ENCODE measurements at regions of chr16 and their contacts with region 1.

Region 1: DNA sequence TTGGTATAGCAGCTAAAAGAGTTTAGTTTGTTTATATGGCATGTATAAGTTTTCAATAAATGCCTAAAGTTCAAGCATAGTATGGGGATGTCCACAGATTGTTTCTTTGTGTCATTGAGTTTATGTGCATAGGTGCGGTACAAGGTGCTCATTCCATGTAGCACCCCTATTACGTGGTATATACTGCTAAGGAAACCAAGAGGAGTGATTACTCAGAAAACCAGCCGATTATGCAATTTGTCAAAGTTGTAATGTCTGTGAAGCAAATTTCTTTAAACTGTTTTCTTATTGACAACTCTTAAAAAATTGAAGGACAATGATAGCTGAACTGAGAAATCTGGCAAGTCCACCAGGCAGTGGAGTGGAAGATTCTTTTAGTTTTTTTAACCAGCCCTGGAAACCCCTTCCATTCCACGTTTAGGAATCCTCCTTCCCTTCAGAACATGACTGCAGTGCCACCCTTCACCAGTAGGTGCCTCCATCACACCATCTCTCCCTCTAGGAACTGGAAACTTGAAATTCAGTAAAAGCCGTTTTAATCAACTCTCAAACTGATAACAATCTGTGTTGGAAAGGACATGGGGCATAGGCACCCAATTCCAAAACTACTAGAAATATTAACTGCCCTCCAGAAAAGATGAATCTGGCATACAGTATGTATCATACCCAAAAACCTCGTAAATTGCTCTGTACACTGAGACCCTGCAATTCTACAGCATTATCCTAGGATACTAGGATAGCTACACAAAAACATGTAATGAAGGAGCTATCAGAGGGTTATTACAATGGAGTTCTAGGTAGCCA is 43.5 kb downstream of the REXO5 start:
- DNase-seq: peak; percentile 59
- H3K4me3 ChIP-seq: no peak overlapping the region
- H3K27ac ChIP-seq: no peak overlapping the region
- H3K4me1 ChIP-seq: peaks cover 26% of the 10 kb centered on the region
- H3K27me3 ChIP-seq: no peaks in the 10 kb centered on the region
- CTCF ChIP-seq: peak; percentile 99

Region 2: DNA sequence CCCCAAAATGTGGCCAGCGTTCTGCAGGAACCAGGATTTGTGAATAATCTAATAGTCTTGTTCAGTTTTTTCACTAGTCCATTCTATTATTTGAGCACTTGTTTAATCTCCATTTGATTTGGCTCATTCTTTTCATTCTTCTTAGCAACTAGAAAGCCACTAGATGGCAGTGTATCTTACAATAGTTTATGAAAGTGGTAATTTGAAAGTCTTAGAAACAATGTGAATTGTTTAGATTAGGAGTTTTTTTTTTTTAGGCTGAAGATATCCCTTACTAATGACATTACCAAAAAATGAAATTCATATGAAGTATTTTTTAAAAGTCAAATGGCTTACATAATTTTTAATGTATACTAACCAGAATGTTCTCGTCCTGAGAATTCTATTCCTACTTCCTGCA is 50.2 kb before region 1 on chr16:
- CTCF ChIA-PET with region 1: no interaction called
- dilution Hi-C with region 1: no loop called
- in situ Hi-C with region 1: no loop called
- intact Hi-C with region 1: no loop called
- DNase-seq: no peak
- H3K4me3 ChIP-seq: no peak overlapping the region
- H3K27ac ChIP-seq: no peak overlapping the region
- H3K4me1 ChIP-seq: peaks cover 12% of the 10 kb centered on the region
- H3K27me3 ChIP-seq: no peaks in the 10 kb centered on the region
- CTCF ChIP-seq: peak; percentile 59 to 60

Region 3: DNA sequence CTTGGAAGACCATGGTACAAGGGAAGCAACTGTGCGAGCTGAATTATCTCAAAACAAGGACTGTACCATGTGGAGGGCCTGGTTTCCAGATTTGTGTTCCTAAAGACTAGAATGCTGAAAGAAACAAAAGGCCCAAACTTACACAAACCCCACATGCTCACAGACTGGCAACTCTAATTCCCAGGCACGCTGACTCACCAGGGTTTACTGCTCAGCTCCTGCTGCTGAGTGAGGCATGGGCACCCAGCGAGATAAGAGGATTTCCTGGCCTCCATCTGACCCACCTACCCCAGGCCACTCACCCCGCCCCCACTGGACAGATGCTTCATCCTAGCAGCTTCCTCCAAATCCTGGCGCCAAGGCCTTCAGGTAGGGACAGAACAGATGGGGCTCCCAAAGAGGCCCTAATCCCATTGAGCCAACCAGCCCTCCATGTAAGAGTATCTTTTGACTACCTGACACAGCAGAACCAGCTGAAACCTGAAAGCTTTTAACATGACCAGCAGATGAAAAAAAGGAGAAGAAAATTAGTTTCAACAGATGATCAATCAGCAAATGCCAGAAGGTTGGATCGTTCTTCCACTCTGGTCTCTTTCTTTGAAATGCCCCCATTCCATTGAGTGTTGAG is 16.5 kb after region 1 on chr16:
- CTCF ChIA-PET with region 1: no interaction called
- dilution Hi-C with region 1: no loop called
- in situ Hi-C with region 1: no loop called
- intact Hi-C with region 1: loop called (anchors 1 kb)
- DNase-seq: peak; percentile 88
- H3K4me3 ChIP-seq: peak overlapping the region in 2 of 3 experiments; percentile 2 to 17
- H3K27ac ChIP-seq: peak overlapping the region; percentile 97
- H3K4me1 ChIP-seq: peaks cover 62% of the 10 kb centered on the region
- H3K27me3 ChIP-seq: no peaks in the 10 kb centered on the region
- CTCF ChIP-seq: no peak

Region 4: DNA sequence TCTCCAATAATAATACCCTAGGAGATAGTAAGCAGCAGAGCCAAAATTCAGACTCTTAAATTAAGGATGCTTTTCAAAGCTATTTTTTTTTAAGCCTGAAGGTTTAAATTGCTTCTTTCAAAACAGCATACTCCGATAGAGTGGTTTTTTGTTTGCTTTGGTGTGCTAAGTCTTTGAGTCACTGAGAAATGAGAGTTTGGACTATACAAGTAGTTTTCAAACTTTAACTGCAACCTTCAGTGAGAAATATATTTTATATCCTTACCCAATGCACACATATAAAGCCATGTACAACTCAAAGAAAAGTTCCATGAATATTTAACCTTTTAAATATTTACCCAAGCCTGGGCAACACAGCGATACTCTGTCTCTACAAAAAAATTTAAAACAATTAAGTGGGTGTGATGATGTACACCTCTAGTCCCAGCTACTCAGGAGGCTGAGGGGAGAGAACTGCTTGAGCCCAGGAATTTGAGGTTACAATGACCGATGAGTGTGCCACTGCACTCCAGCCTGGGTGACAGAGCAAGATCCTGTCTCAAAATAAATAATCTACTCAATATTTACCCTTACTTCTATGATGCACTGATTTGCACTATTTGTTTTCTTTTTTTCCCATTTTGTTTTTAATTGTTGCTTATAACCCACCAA is 31.2 kb after region 1 on chr16:
- CTCF ChIA-PET with region 1: no interaction called
- dilution Hi-C with region 1: no loop called
- in situ Hi-C with region 1: no loop called
- intact Hi-C with region 1: no loop called
- DNase-seq: no peak
- H3K4me3 ChIP-seq: no peak overlapping the region
- H3K27ac ChIP-seq: no peak overlapping the region
- H3K4me1 ChIP-seq: peaks cover 25% of the 10 kb centered on the region
- H3K27me3 ChIP-seq: no peaks in the 10 kb centered on the region
- CTCF ChIP-seq: no peak

Region 5: GRCh38 chr16:20944861-20945574 is 95.2 kb after region 1 on chr16:
- CTCF ChIA-PET with region 1: interaction called, 5 read pairs
- dilution Hi-C with region 1: no loop called
- in situ Hi-C with region 1: no loop called
- intact Hi-C with region 1: loop called (anchors 1 kb)
- DNase-seq: peak; percentile 19
- H3K4me3 ChIP-seq: no peak overlapping the region
- H3K27ac ChIP-seq: no peak overlapping the region
- H3K4me1 ChIP-seq: no peaks in the 10 kb centered on the region
- H3K27me3 ChIP-seq: no peaks in the 10 kb centered on the region
- CTCF ChIP-seq: peak in 1 of 2 donors; percentile 26

Region 6: GRCh38 chr16:21083729-21084268 is 234.0 kb after region 1 on chr16:
- CTCF ChIA-PET with region 1: no interaction called
- dilution Hi-C with region 1: no loop called
- in situ Hi-C with region 1: loop called (anchors 5 to 10 kb)
- intact Hi-C with region 1: loop called (anchors 1 kb)
- DNase-seq: peak; percentile 36
- H3K4me3 ChIP-seq: no peak overlapping the region
- H3K27ac ChIP-seq: no peak overlapping the region
- H3K4me1 ChIP-seq: peaks cover 3% of the 10 kb centered on the region
- H3K27me3 ChIP-seq: no peaks in the 10 kb centered on the region
- CTCF ChIP-seq: peak; percentile 65 to 84

Region 7: GRCh38 chr16:21158208-21159110 is 308.7 kb after region 1 on chr16 and contains the start of gene LDAF1:
- CTCF ChIA-PET with region 1: interaction called, 3 read pairs
- dilution Hi-C with region 1: no loop called
- in situ Hi-C with region 1: no loop called
- intact Hi-C with region 1: loop called (anchors 5 kb)
- DNase-seq: peak; percentile 83
- H3K4me3 ChIP-seq: peak within 1 kb of the TSS; percentile 74 to 76 (median 76)
- H3K27ac ChIP-seq: peak within 1 kb of the TSS; percentile 74
- H3K4me1 ChIP-seq: peaks cover 14% of the 10 kb centered on the region
- H3K27me3 ChIP-seq: no peaks in the 10 kb centered on the region
- CTCF ChIP-seq: no peak
- total RNA-seq, gene LDAF1: 43.5 to 131 TPM

Region 8: GRCh38 chr16:21300309-21301167 is 450.7 kb after region 1 on chr16:
- CTCF ChIA-PET with region 1: no interaction called
- dilution Hi-C with region 1: no loop called
- in situ Hi-C with region 1: no loop called
- intact Hi-C with region 1: loop called (anchors 10 kb)
- DNase-seq: peak; percentile 100
- H3K4me3 ChIP-seq: peak overlapping the region; percentile 57 to 82 (median 68)
- H3K27ac ChIP-seq: peak overlapping the region; percentile 98
- H3K4me1 ChIP-seq: peaks cover 13% of the 10 kb centered on the region
- H3K27me3 ChIP-seq: no peaks in the 10 kb centered on the region
- CTCF ChIP-seq: peak; percentile 85 to 93